ENCODE measurements at regions of chr14 and their contacts with region 1.

Region 1: DNA sequence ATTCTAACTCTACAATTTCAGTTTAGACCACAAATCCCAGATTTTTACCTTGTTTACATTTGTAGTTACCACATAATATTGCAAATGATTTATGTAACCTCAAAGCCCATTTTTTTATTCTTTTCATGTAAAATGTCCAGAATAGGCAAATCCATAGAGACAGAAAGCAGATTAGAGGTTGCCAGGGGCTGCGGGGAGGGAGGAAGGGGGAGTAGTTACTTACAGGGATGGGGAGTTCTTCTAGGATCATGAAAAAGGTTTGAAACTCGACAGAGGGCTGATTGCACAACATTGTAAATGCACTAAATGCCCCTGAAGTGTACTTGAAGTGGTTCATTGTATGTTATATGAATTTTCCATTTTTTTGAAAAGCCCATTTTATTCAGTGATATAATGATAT is 66.5 kb downstream of the PPP2R5C start:
- DNase-seq: no peak
- ATAC-seq: no peak
- H3K4me3 ChIP-seq: no peak overlapping the region
- H3K4me1 ChIP-seq: no peaks in the 10 kb centered on the region
- CTCF ChIP-seq: no peak

Region 2: GRCh38 chr14:101791919-101792572 is 36.0 kb before region 1 on chr14:
- intact Hi-C with region 1: loop called in 1 of 2 experiments (anchors 5 kb)
- DNase-seq: no peak
- ATAC-seq: peak; percentile 84
- H3K4me3 ChIP-seq: no peak overlapping the region
- H3K4me1 ChIP-seq: peaks cover 10% of the 10 kb centered on the region
- CTCF ChIP-seq: no peak